ENCODE measurements at regions of chr2 and their contacts with region 1.

Region 1: GRCh38 chr2:203887677-203888076 is 20.1 kb downstream of the CTLA4 start:
- DNase-seq: no peak
- H3K4me3 Mint-ChIP-seq: no peak overlapping the region
- H3K27ac Mint-ChIP-seq: peak overlapping the region; percentile 90
- H3K4me1 Mint-ChIP-seq: peaks cover 84% of the 10 kb centered on the region
- H3K27me3 Mint-ChIP-seq: peaks cover 2% of the 10 kb centered on the region

Region 2: DNA sequence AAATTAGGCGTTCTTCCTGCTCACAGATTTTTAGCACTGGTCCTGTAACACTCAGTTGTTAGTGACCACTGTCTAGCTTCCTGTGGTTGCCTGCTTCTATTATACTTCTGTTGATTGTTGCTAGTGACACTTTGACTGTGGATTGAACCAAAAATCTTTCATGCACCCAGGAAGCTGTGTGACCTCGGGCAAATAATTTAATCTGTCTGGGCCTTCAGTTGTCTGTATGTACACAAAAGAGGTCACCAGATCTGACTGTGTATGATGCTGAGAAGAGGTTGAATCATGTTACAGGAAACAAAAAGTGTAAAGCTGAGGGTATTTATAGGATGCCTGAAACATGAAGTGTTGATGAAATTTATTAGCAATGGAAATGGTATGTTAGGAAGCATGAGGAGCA is 61.6 kb after region 1 on chr2:
- CTCF ChIA-PET with region 1: no interaction called
- POLR2A ChIA-PET with region 1: interaction called, 10 read pairs
- intact Hi-C with region 1: no loop called
- DNase-seq: no peak
- H3K4me3 Mint-ChIP-seq: peak overlapping the region; percentile 65
- H3K27ac Mint-ChIP-seq: peak overlapping the region; percentile 89
- H3K4me1 Mint-ChIP-seq: peaks cover 87% of the 10 kb centered on the region
- H3K27me3 Mint-ChIP-seq: no peaks in the 10 kb centered on the region

Measured in activated CD4-positive, alpha-beta memory T cell treated with anti-CD3 and anti-CD28 coated beads for 36 hours (primary cell).